Adrenal gland (tissue), 19 donors: ENCODE measurements at regions of chr11 and their contacts with region 1.

Region 1: DNA sequence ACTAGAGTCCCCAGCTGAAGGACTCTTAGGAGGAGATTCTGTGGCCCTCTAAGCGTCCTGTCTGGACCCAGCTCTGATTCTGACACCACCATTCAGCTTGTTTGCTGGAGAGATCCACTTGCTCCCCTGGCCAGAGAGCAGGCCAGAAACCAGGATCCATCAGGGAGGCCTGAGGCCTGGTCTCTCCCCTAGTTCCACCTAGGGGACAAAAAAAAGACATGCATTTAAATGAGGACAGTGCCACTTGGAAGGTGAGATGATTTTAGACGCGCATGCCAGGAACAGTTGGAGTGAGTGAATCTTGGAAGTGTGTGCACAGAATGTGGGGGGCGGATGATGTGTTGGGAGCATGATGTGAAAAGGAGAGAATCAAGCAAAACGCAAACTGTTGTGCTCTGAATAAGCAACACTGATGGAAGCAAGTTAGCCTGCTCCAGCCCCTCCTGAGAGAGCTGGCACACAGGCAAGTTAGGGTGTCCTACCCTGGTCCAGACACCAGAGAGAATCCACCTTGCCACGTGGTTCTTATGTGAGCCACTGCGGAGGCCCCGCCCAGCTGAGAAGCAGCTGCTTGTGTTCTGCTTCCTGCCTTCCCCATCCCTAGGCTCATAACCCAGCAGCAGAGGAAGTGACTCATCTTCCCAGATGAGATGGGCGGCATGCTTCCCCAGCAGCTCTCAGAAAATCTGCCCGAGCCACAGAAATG is 8.0 kb upstream of the SLCO2B1 start:
- DNase-seq: peak; percentile 56 to 92 (median 76)
- H3K4me3 ChIP-seq: no peak overlapping the region
- H3K27ac ChIP-seq: peak overlapping the region in 2 of 5 donors; percentile 71 to 82
- H3K4me1 ChIP-seq: peaks cover 0 to 30% of the 10 kb centered on the region in 2 donors
- H3K27me3 ChIP-seq: no peaks in the 10 kb centered on the region
- CTCF ChIP-seq: peak in 2 of 6 experiments; percentile 27 to 28
- POLR2A ChIP-seq: no peak

Region 2: GRCh38 chr11:74929431-74930363 is 213.2 kb before region 1 on chr11:
- intact Hi-C with region 1: loop called in 1 of 2 experiments (anchors 5 kb)
- DNase-seq: peak; percentile 75 to 92 (median 82)
- H3K4me3 ChIP-seq: no peak overlapping the region
- H3K27ac ChIP-seq: no peak overlapping the region
- H3K4me1 ChIP-seq: no peaks in the 10 kb centered on the region
- H3K27me3 ChIP-seq: no peaks in the 10 kb centered on the region
- CTCF ChIP-seq: peak; percentile 78 to 92 (median 90)
- POLR2A ChIP-seq: no peak

Region 3: DNA sequence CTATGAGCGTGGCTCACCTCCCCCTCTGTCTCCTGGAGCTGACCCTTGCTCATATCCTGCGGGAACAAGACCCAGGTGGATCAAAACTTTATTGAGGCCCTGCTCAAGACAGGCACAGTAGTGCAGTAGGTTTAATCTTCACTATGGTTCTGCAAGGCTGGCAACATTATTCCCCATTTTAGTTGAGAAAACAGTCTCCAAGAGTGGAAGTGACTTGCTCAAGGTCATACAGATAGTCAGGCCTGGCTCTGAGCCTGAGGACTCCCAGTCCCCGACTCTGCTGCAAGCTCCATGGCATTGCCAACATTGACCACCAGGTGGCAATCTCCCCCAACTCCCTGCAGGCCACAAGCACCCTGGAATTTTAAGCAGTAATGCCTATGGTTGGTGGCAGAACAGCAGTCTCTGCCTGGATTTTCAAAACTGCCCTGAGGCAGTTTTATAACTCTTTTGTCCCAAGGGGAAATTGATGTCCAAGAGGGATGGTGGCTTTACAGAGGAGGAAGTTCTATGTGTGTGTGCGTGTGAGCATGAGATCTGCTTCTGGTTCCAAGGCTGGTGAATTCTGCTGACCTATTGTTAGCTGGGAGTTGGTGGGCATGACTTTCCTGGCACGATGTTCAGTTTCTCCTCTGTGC is 120.0 kb before region 1 on chr11:
- intact Hi-C with region 1: loop called in 1 of 2 experiments (anchors 10 kb)
- DNase-seq: peak; percentile 91 to 98 (median 96)
- H3K4me3 ChIP-seq: no peak overlapping the region
- H3K27ac ChIP-seq: peak overlapping the region; percentile 29 to 82 (median 60)
- H3K4me1 ChIP-seq: peaks cover 10 to 16% of the 10 kb centered on the region in 2 donors
- H3K27me3 ChIP-seq: no peaks in the 10 kb centered on the region
- CTCF ChIP-seq: peak; percentile 96 to 99 (median 98)
- POLR2A ChIP-seq: no peak

Region 4: DNA sequence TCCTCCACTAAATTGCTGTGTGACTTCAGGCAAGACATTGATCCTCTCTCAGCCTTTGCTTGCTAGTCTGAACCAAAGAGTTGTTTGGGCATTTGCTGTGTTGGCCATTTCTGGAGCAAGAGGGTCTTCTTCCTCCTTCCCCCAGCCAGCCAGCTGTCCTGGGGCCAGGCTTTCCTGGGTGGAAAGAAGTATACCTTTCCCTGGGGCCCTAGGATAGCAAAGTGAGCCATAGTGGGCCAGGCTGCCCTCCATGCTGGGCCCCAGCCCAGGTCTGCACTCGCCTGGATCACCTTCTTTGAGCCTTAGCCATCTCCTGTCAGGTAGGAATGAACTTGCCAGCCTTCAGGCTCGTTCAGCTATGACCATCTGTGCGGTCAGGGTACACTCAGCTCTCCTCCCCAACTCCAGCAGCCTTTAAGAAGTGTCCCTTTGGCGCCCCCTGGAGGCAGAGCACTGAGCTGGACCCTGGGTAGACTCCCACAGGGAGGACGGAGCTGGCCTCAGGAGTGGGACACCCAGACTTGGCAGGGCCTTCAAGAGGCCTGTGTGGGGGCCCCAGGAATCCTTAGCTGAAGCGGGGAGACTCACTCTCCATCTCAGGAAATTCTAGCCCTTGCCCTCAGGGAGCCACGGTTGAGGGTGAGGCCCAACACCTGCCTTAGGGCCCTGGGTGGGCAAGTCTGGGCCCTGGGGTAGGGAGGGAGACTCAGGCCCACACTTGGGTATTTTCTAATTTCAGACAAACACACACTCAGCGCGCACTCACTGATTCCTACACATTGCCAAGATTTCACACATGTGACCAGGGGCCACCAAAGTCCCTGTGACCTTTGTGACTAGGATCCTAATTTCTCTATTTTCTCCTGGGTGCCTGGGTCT is 62.1 kb after region 1 on chr11:
- intact Hi-C with region 1: loop called (anchors 2 to 5 kb)
- DNase-seq: peak; percentile 87 to 97 (median 93)
- H3K4me3 ChIP-seq: no peak overlapping the region
- H3K27ac ChIP-seq: peak overlapping the region in 1 of 5 donors; percentile 82
- H3K4me1 ChIP-seq: peaks cover 0 to 13% of the 10 kb centered on the region in 2 donors
- H3K27me3 ChIP-seq: no peaks in the 10 kb centered on the region
- CTCF ChIP-seq: peak; percentile 87 to 93 (median 92)
- POLR2A ChIP-seq: no peak

Region 5: GRCh38 chr11:75241036-75241905 is 98.4 kb after region 1 on chr11:
- intact Hi-C with region 1: loop called (anchors 2 to 5 kb)
- DNase-seq: peak; percentile 73 to 91 (median 85)
- H3K4me3 ChIP-seq: peak overlapping the region in 1 of 4 donors; percentile 62
- H3K27ac ChIP-seq: peak overlapping the region in 1 of 5 donors; percentile 30
- H3K4me1 ChIP-seq: peaks cover 0 to 9% of the 10 kb centered on the region in 2 donors
- H3K27me3 ChIP-seq: no peaks in the 10 kb centered on the region
- CTCF ChIP-seq: peak in 3 of 6 experiments; percentile 96 to 100 (median 100)
- POLR2A ChIP-seq: peak in 1 of 2 donors; percentile 18

Region 6: GRCh38 chr11:75248690-75249268 is 105.9 kb after region 1 on chr11:
- intact Hi-C with region 1: loop called (anchors 2 to 5 kb)
- DNase-seq: peak; percentile 89 to 96 (median 90)
- H3K4me3 ChIP-seq: no peak overlapping the region
- H3K27ac ChIP-seq: no peak overlapping the region
- H3K4me1 ChIP-seq: no peaks in the 10 kb centered on the region
- H3K27me3 ChIP-seq: no peaks in the 10 kb centered on the region
- CTCF ChIP-seq: peak; percentile 95 to 100 (median 98)
- POLR2A ChIP-seq: no peak